ENCODE measurements at regions of chr16 and their contacts with region 1.

Region 1: DNA sequence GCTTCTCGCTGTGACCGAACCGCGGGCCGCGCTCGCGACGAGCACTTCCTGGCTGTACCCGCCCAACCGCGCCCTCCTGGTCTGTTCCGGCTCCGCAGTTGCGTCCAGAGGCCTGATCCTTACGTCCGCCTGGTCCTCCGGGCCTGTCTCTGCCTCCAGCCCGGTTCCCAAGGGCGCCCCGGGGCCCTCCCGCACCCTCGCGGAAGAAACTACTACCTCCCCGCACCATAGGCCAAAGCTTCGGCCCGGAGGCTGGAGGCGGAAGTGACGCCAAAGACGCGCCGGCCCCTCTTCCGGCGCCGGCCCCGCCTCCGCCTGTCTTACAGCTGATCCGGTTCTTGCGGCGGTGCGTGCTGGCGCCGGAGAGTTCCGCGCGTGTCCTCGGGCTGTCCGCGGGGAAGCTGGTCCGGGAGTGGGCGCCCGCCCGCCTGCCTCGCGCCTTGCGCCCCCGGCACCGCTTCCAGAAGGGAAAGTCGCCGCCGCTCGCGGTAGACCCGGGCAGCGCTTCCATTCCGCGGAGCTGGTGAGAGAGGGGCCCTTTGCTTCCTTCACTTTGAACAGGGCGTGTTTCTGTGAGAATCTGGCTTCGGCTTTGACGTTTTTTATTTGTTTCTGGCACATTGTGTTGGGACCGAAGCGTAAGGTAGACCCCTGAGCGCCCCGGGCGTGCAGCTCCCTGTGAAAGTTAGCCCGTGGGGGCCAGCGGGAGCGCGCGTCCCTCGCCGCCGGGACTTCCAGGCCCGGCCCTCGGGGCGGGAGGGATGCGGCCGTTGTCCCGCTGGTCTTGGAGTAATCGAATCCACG is at the start of gene ZNF778:
- DNase-seq: peak; percentile 81 to 92
- ATAC-seq: peak; percentile 79 to 88 (median 84)
- H3K4me3 ChIP-seq: peak within 1 kb of the TSS; percentile 96
- H3K4me3 Mint-ChIP-seq: peak within 1 kb of the TSS; percentile 96
- H3K27ac ChIP-seq: peak within 1 kb of the TSS; percentile 99
- H3K27ac Mint-ChIP-seq: peak within 1 kb of the TSS; percentile 85 to 98
- H3K4me1 ChIP-seq: peaks cover 19% of the 10 kb centered on the region
- H3K4me1 Mint-ChIP-seq: peaks cover 23 to 41% of the 10 kb centered on the region in 2 donors
- H3K27me3 ChIP-seq: no peaks in the 10 kb centered on the region
- H3K27me3 Mint-ChIP-seq: no peaks in the 10 kb centered on the region
- CTCF ChIP-seq: no peak
- total RNA-seq, gene ZNF778: 7.0 to 14.1 (median 11.8) TPM

Region 2: GRCh38 chr16:88737298-88738150 is 480.1 kb before region 1 on chr16:
- intact Hi-C with region 1: loop called (anchors 1 kb)
- DNase-seq: peak; percentile 75 to 85
- ATAC-seq: peak; percentile 85 to 99 (median 90)
- H3K4me3 ChIP-seq: no peak overlapping the region
- H3K4me3 Mint-ChIP-seq: no peak overlapping the region
- H3K27ac ChIP-seq: no peak overlapping the region
- H3K27ac Mint-ChIP-seq: no peak overlapping the region
- H3K4me1 ChIP-seq: peaks cover 12% of the 10 kb centered on the region
- H3K4me1 Mint-ChIP-seq: peaks cover 0 to 5% of the 10 kb centered on the region in 2 donors
- H3K27me3 ChIP-seq: no peaks in the 10 kb centered on the region
- H3K27me3 Mint-ChIP-seq: no peaks in the 10 kb centered on the region
- CTCF ChIP-seq: peak; percentile 98

Region 3: DNA sequence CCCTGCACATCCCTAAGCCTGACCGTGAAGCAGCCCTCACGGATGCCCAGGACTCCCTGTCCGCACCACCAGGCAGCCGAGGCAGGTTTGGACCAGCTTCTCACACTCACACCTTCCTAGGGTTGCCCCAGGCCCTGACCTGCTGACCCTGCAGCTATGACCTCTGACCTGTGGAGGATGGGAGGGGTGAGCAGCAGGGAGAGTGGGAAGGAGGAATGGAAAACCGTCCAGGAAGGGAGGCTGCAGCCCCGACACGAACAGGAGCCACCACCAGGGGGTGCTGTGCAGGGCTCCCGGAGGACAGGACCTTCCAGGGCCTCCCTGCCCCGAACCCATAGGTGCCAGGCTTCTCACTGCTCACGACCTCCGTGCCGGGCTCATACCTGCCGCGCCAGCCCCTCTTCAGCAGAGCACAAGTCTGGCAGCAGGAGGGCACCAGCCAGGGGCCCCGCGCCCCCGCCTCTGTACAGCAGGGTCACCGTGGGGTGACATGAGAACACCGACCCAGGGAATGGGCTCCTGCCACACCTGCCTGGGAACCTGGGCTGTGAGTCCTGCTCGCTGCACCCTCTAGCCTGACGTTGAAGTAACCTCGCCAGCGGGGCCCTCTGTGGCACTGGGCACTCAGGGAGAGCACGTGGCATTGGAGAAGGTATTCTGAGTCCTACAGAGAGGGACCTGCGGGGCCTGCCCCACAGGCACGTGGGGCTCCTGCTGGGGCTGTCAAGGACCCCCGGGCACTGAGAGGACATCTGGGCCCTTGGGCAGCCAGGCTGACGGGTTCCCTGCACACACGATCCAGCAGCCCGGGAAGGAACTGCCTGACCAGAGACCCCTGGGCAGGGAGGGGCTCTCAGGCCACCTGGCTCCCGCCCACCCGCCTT is 473.7 kb before region 1 on chr16:
- intact Hi-C with region 1: loop called (anchors 2 kb)
- DNase-seq: peak; percentile 71 to 86
- ATAC-seq: peak; percentile 60 to 77 (median 74)
- H3K4me3 ChIP-seq: no peak overlapping the region
- H3K4me3 Mint-ChIP-seq: no peak overlapping the region
- H3K27ac ChIP-seq: no peak overlapping the region
- H3K27ac Mint-ChIP-seq: no peak overlapping the region
- H3K4me1 ChIP-seq: peaks cover 35% of the 10 kb centered on the region
- H3K4me1 Mint-ChIP-seq: peaks cover 12 to 24% of the 10 kb centered on the region in 2 donors
- H3K27me3 ChIP-seq: no peaks in the 10 kb centered on the region
- H3K27me3 Mint-ChIP-seq: no peaks in the 10 kb centered on the region
- CTCF ChIP-seq: peak; percentile 94

Region 4: GRCh38 chr16:88941913-88942909 is 275.4 kb before region 1 on chr16:
- intact Hi-C with region 1: loop called (anchors 1 kb)
- DNase-seq: peak; percentile 50 to 74
- ATAC-seq: peak; percentile 69 to 84 (median 73)
- H3K4me3 ChIP-seq: no peak overlapping the region
- H3K4me3 Mint-ChIP-seq: peak overlapping the region; percentile 31
- H3K27ac ChIP-seq: no peak overlapping the region
- H3K27ac Mint-ChIP-seq: no peak overlapping the region
- H3K4me1 ChIP-seq: peaks cover 49% of the 10 kb centered on the region
- H3K4me1 Mint-ChIP-seq: peaks cover 0 to 6% of the 10 kb centered on the region in 2 donors
- H3K27me3 ChIP-seq: peaks cover 17% of the 10 kb centered on the region
- H3K27me3 Mint-ChIP-seq: peaks cover 25 to 35% of the 10 kb centered on the region in 2 donors
- CTCF ChIP-seq: peak; percentile 72

Region 5: GRCh38 chr16:89093602-89094251 is 123.9 kb before region 1 on chr16 and contains the start of gene ACSF3:
- intact Hi-C with region 1: loop called (anchors 10 kb)
- DNase-seq: peak; percentile 69 to 82
- ATAC-seq: peak; percentile 82 to 84 (median 83)
- H3K4me3 ChIP-seq: peak within 1 kb of the TSS; percentile 66
- H3K4me3 Mint-ChIP-seq: peak within 1 kb of the TSS; percentile 93
- H3K27ac ChIP-seq: peak within 1 kb of the TSS; percentile 60
- H3K27ac Mint-ChIP-seq: peak within 1 kb of the TSS; percentile 69 to 71
- H3K4me1 ChIP-seq: peaks cover 54% of the 10 kb centered on the region
- H3K4me1 Mint-ChIP-seq: peaks cover 45 to 47% of the 10 kb centered on the region in 2 donors
- H3K27me3 ChIP-seq: no peaks in the 10 kb centered on the region
- H3K27me3 Mint-ChIP-seq: peaks cover 15 to 31% of the 10 kb centered on the region in 2 donors
- CTCF ChIP-seq: no peak
- total RNA-seq, gene ACSF3: 45.0 to 71.4 (median 51.6) TPM

Region 6: DNA sequence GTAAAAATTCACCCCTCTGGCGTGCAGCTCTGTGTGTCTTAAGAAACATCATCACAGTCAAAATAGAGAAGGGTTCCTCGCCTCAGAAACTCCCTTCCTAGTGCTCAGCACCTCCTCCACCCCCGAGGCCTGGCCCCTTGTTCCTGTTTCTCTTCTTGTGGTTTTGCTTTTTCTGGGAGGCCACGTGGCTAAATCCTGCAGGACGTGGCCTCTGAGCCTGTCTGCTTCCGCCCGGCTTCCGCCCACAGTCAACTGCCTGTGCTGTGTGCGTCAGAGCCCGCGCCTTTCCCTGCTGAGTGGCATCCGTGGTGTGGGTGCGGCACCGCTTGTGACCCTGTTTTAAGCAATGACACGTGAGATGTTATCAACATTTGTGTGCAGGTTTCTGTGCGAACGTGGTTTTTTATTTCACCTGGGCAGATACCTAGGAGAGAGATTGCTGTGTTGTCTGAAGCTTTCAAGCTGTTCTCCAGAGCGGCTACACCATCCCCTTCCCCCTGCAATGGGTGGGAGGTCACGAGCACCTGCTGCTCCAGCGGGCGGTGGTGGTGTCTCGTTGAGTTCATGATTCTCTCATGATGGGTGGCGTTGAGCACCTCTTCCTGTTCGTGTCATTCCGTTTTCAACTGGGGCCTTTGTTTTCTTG is 102.3 kb before region 1 on chr16:
- intact Hi-C with region 1: loop called (anchors 2 kb)
- DNase-seq: peak; percentile 77 to 97
- ATAC-seq: peak; percentile 88 to 95 (median 94)
- H3K4me3 ChIP-seq: peak overlapping the region; percentile 8
- H3K4me3 Mint-ChIP-seq: peak overlapping the region; percentile 84
- H3K27ac ChIP-seq: peak overlapping the region; percentile 81
- H3K27ac Mint-ChIP-seq: peak overlapping the region; percentile 92
- H3K4me1 ChIP-seq: peaks cover 47% of the 10 kb centered on the region
- H3K4me1 Mint-ChIP-seq: peaks cover 39 to 47% of the 10 kb centered on the region in 2 donors
- H3K27me3 ChIP-seq: no peaks in the 10 kb centered on the region
- H3K27me3 Mint-ChIP-seq: no peaks in the 10 kb centered on the region
- CTCF ChIP-seq: no peak

Measured in natural killer cell (primary cell).